Left ventricle myocardium inferior (tissue), 1 donor: ENCODE measurements at regions of chr5 and their contacts with region 1.

Region 1: GRCh38 chr5:56588636-56589480 is 226.5 kb upstream of the MAP3K1 start:
- DNase-seq: peak; percentile 74
- H3K4me3 ChIP-seq: no peak overlapping the region
- H3K27ac ChIP-seq: peak overlapping the region; percentile 87
- H3K4me1 ChIP-seq: peaks cover 48% of the 10 kb centered on the region
- H3K27me3 ChIP-seq: no peaks in the 10 kb centered on the region
- CTCF ChIP-seq: no peak

Region 2: DNA sequence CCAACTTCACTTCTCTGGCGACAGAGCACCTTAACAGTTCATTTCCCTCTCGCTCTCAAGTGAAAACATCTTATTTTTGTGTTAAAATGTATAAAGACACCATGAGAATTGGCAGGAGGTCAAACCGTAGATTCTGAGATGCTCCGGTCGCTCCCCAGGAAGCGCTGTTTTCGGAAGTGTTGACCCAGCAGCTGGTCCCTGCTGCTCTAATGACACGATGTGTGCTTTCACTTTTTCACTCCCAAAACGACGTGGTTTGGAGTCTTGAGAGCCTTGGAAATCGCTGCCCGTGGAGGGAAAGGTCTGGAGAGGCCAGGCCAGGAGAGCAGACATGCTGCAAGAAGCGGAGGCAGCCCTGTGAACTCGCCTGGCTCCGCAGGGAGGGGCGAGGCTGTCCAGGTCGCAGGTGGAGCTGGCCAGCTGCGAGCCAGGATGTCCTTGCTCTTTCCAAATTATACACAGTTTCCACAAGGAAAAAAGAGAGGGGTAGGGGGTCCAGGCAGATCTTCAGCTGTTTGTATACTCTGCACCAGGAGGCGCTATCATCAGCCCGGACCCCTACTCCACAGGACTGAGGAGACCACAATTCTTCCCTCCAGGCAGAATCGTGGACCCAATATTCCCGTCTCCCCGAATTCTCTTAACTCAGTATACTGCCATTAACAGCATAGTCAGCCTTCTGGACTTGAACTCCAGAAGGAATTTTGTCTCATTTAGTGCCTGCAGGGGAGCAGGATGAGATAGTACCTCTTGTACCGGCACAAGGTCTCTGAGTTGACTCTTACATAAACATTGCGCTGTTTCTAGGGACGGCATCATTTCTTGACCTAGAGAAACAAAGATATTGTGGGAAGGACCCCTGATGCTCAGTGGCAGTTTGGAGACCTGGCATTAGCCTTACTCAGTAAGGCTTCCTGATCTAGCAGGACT is 107.2 kb before region 1 on chr5:
- intact Hi-C with region 1: loop called (anchors 5 kb)
- DNase-seq: peak; percentile 57
- H3K4me3 ChIP-seq: peak overlapping the region; percentile 79
- H3K27ac ChIP-seq: peak overlapping the region; percentile 97
- H3K4me1 ChIP-seq: peaks cover 44% of the 10 kb centered on the region
- H3K27me3 ChIP-seq: no peaks in the 10 kb centered on the region
- CTCF ChIP-seq: peak; percentile 46

Region 3: DNA sequence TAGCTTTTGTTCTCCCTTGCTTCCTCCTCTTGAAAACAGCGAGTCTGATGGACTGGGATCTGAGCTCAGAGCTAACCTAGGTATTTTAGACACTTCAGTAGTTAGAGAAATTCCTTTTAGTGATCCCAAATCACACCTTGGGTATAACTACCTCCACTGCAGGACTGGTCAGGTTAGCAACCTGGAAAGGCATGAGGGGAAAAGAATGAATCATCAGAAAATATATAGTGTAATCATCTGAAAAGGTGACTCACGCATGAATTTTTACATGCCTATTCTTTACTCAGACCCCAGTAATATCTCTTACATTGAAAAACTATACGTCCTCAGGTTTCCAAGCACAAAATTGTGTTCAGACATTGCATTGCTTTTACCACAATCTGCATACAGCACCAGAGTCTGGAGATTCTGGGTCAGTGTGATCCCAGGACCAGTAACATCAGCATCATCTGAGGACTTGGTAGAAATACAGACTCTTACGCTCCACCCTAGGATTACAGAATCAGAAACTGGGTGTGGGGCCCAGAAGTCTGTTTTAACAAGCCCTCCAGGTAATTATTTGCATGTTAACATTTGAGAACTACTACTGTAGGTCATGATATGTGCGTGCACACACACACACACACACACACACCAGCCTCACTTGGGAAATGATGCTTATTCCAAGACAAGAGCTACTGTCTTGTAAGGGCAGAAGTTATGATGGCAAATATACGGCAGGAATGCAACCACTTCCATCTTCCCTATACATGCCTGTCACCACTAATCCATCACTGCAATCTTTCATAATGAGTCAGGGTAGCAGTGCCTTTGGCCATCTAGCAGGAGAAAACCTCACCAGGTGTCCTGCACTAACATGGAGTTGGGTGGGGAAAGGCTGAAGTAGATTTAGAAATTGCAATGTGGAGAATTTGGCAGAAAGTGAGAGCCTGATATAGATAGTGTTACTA is 45.1 kb before region 1 on chr5:
- intact Hi-C with region 1: no loop called
- DNase-seq: no peak
- H3K4me3 ChIP-seq: no peak overlapping the region
- H3K27ac ChIP-seq: no peak overlapping the region
- H3K4me1 ChIP-seq: peaks cover 5% of the 10 kb centered on the region
- H3K27me3 ChIP-seq: no peaks in the 10 kb centered on the region
- CTCF ChIP-seq: no peak